Pancreas (tissue), 10 donors: ENCODE measurements at regions of chr13 and their contacts with region 1.

Region 1: GRCh38 chr13:107211073-107211472 is 643.1 kb upstream of the ARGLU1 start:
- DNase-seq: peak in 5 of 6 donors; percentile 43 to 79 (median 65)
- ATAC-seq: peak; percentile 86 to 99 (median 98)
- H3K4me3 ChIP-seq: no peak overlapping the region
- H3K27ac ChIP-seq: no peak overlapping the region
- H3K4me1 ChIP-seq: no peaks in the 10 kb centered on the region
- H3K27me3 ChIP-seq: peaks cover 0 to 3% (median 0%) of the 10 kb centered on the region in 4 donors
- CTCF ChIP-seq: peak; percentile 60 to 87 (median 84)

Region 2: DNA sequence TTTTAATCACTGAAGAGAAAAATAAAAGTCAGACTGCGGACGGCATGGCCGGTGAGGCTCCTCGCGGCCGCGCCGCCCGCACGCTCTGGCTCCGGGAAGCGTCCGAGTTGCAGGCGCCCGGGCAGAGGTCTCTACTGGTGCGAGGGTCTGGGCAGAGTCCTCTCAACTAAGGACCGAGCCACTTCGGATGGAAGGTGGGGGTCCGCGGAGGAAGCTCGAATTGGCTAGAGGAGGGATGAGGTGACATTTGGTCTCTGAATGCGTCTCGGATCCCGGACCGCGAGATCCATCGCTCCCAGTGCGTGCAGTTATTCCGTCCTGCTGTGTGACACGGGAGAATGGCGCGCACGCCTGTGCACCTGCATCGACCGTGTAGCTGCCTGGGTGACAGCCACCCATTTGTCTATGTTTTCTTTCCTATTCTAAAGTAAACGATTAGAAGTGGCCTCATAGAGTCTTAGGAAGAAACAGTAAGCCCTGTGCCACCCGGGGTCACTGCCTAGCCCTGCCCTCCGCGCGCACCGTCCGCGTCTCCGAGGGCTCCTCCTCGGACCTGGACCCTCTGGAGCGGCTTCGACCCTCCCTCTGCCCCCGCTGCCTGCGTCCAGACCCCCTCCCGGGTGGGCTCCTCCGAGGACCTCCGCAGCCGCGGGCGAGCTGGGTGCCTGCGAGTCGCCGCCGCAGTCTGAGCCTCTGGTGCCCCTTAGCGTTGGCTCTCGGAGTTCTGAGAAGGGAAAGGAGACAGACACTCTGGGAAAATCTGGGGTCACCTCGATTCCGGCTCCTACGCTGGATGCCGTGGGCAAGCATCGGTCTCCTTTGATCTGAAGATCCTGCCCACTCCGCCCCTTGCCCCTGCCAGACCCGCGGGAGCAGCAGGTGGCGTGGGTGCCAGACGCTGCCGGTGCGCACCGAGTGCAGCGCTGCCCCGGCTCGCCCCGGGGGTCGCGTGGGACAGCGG is 656.9 kb after region 1 on chr13:
- intact Hi-C with region 1: loop called in 1 of 3 experiments (anchors 10 kb)
- DNase-seq: peak; percentile 13 to 77 (median 34)
- ATAC-seq: peak; percentile 47 to 78 (median 76)
- H3K4me3 ChIP-seq: peak overlapping the region; percentile 20 to 47 (median 36)
- H3K27ac ChIP-seq: no peak overlapping the region
- H3K4me1 ChIP-seq: peaks cover 0 to 6% (median 2%) of the 10 kb centered on the region in 3 donors
- H3K27me3 ChIP-seq: peaks cover 0 to 24% (median 2%) of the 10 kb centered on the region in 4 donors
- CTCF ChIP-seq: peak in 1 of 4 donors; percentile 10

Region 3: GRCh38 chr13:108155185-108156106 is 944.4 kb after region 1 on chr13:
- intact Hi-C with region 1: loop called in 2 of 3 experiments (anchors 5 to 10 kb)
- DNase-seq: peak in 5 of 6 donors; percentile 28 to 79 (median 66)
- ATAC-seq: peak; percentile 74 to 87 (median 80)
- H3K4me3 ChIP-seq: no peak overlapping the region
- H3K27ac ChIP-seq: peak overlapping the region in 2 of 4 donors; percentile 4 to 65
- H3K4me1 ChIP-seq: peaks cover 9 to 20% (median 14%) of the 10 kb centered on the region in 3 donors
- H3K27me3 ChIP-seq: no peaks in the 10 kb centered on the region
- CTCF ChIP-seq: peak; percentile 62 to 85 (median 78)